Right cardiac atrium (tissue), 5 donors: ENCODE measurements at regions of chr2 and their contacts with region 1.

Region 1: GRCh38 chr2:57906152-57906732 is 140.4 kb upstream of the VRK2 start:
- DNase-seq: no peak
- ATAC-seq: peak; percentile 79 to 88
- H3K4me3 ChIP-seq: no peak overlapping the region
- H3K27ac ChIP-seq: no peak overlapping the region
- H3K4me1 ChIP-seq: no peaks in the 10 kb centered on the region
- H3K27me3 ChIP-seq: no peaks in the 10 kb centered on the region

Region 2: DNA sequence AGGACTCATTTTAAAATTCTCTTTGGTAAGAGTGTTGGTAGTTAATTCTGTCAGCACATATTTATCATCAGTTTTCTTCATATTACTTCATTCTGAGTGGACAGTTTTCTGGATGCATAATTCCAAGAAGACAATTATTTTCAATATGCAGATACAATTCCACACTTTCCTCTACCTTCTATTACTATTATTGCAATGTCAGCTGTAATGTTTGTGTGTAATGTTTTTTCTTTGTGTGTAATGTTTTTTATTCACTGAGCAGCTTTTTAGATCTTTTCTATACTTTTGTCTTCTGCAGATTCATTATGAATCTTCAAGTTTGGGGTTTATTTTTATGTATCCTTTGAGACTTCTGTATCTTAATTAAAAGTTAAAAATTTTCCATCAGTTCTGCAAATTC is 123.7 kb before region 1 on chr2:
- intact Hi-C with region 1: no loop called
- DNase-seq: no peak
- ATAC-seq: no peak
- H3K4me3 ChIP-seq: no peak overlapping the region
- H3K27ac ChIP-seq: no peak overlapping the region
- H3K4me1 ChIP-seq: no peaks in the 10 kb centered on the region
- H3K27me3 ChIP-seq: no peaks in the 10 kb centered on the region

Region 3: DNA sequence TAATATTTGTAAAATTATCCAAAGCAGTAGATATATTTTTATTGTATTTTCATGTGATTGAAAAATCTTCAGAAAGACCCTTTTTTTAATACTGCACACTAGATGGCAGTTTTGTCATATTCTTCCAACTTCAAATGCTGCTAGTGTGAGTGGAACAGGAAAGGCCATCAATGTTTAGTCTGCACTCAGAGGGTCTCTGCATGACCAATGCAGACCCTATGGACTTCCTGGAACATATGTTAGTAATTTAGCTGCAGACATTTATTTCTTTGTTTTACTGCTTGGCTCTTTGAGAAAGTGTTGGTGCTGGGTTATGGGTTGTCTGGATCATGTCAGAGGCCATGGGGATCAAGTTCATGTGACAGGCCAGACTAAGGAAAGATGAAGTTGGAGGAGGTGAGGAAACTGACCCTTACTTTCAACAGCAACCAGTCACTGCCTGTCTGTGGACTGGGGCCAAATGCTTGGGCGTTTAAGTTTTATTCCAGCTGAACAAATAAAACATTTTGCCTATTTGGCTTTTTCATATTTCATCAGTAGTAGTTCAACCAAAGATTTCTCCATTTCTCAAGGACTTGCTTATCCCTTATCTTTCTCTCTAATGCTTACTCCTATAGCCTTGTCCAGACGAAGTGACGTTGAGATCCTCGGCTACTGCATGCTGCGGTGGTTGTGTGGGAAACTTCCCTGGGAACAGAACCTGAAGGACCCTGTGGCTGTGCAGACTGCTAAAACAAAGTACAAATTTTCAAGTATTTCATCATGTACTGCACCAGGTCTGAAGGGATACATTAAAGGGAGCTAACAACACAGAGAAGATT is 225.2 kb after region 1 on chr2:
- intact Hi-C with region 1: no loop called
- DNase-seq: peak; percentile 17 to 59 (median 52)
- ATAC-seq: peak; percentile 64 to 73
- H3K4me3 ChIP-seq: no peak overlapping the region
- H3K27ac ChIP-seq: no peak overlapping the region
- H3K4me1 ChIP-seq: peaks cover 2% of the 10 kb centered on the region
- H3K27me3 ChIP-seq: no peaks in the 10 kb centered on the region

Region 4: GRCh38 chr2:58448065-58448507 is 541.8 kb after region 1 on chr2:
- intact Hi-C with region 1: loop called in 3 of 4 experiments (anchors 5 to 10 kb)
- DNase-seq: peak; percentile 49 to 67 (median 61)
- ATAC-seq: peak; percentile 79 to 93
- H3K4me3 ChIP-seq: no peak overlapping the region
- H3K27ac ChIP-seq: no peak overlapping the region
- H3K4me1 ChIP-seq: no peaks in the 10 kb centered on the region
- H3K27me3 ChIP-seq: no peaks in the 10 kb centered on the region